Right ventricle myocardium superior (tissue), 1 donor: ENCODE measurements at regions of chr18 and their contacts with region 1.

Region 1: GRCh38 chr18:11871501-11871900 is 20.3 kb downstream of the CHMP1B start:
- DNase-seq: no peak
- ATAC-seq: no peak

Region 2: GRCh38 chr18:11733031-11733430 is 138.5 kb before region 1 on chr18:
- intact Hi-C with region 1: loop called (anchors 2 kb)
- DNase-seq: peak; percentile 88
- ATAC-seq: peak; percentile 99